PC-9 (cell line): ENCODE measurements at regions of chr11 and their contacts with region 1.

Region 1: GRCh38 chr11:44645827-44646226 is 80.4 kb downstream of the CD82 start:
- DNase-seq: no peak
- H3K4me3 ChIP-seq: no peak overlapping the region
- H3K27ac ChIP-seq: no peak overlapping the region
- H3K4me1 ChIP-seq: no peaks in the 10 kb centered on the region
- H3K27me3 ChIP-seq: peaks cover 18% of the 10 kb centered on the region
- CTCF ChIP-seq: no peak

Region 2: DNA sequence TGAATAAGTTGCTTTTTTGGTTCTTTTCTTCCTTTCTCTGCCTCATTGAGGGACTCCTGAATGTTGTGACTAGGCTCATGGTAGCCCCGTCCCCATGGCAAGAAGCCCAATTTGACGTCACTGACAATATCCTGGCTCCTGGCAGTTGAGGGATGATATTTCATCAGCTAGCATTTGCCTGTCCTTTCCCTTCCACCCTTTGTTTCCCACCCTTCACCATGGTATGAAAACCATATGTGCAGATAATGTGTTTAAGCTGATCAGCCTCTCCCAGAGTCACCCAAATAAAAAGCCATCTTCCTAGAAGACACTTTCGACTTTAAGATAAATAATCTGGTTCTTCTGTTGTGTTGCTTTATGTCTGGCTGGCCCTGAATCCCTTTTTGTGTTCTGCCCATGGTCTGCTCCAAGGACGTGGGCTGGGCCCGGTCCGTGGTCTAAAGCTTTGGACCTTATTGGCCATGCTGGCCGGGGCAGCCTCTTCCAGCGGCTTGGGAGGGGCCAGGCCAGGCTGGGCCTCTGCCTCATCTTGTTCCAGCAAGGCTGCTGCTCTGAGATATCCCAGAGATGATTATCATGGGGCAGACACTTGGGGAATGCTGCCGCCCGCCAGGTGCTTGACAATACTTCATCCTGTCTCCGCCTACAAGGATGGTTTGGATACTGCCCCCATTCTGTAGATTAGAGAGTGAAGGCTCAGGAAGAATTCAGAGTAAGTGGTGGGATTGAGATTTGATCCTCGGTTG is 86.0 kb after region 1 on chr11:
- CTCF ChIA-PET with region 1: no interaction called
- POLR2A ChIA-PET with region 1: no interaction called
- intact Hi-C with region 1: no loop called
- DNase-seq: no peak
- H3K4me3 ChIP-seq: no peak overlapping the region
- H3K27ac ChIP-seq: no peak overlapping the region
- H3K4me1 ChIP-seq: no peaks in the 10 kb centered on the region
- H3K27me3 ChIP-seq: peaks cover 38% of the 10 kb centered on the region; the same call in 1 of the 2 replicates
- CTCF ChIP-seq: no peak

Region 3: GRCh38 chr11:45212566-45213315 is 566.9 kb after region 1 on chr11:
- CTCF ChIA-PET with region 1: interaction called, 12 read pairs
- POLR2A ChIA-PET with region 1: no interaction called
- intact Hi-C with region 1: no loop called
- DNase-seq: no peak
- H3K4me3 ChIP-seq: no peak overlapping the region
- H3K27ac ChIP-seq: no peak overlapping the region
- H3K4me1 ChIP-seq: no peaks in the 10 kb centered on the region
- H3K27me3 ChIP-seq: peaks cover 38% of the 10 kb centered on the region
- CTCF ChIP-seq: no peak; the same call in 1 of the 2 replicates